ENCODE measurements at regions of chr3 and their contacts with region 1.

Region 1: DNA sequence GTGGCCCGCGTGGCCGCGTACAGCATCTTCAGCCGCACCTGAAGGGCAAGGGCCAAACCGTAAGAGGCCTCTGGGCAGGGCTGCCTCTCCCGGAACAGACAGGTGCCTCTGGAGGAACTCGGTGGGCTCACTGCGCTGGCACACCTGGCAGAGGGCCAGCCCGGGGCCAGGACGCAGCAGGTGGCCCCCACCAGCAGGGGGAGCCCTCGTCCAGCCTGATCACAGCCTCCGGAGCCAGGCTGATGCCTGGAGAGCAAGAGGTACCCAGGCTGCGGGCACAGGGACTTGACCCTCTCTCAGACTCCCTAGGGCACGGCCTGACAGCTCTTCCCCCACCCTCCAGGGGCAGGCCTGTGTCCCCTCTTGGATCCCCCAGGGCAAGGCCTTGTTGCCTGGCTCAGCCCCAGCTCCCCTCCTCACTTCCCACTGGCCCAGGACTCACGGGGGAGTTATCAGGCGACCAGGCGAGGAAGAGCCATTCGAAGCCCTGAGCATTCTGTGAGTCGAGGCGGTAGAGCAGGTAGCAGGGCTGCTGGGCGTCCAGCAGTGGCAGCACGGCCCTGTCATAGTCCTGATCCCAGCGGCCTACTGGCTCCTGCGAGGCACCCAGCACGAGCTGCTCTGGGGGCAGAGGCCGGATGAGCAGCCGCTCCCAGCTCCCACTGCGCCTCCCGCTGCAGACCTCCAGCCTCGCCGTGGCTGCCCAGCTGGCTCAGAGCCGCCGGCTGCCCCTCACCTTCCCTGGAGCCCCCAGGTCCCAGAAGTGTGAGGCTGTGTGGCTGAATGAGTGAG is 6.3 kb upstream of the TLR9 start:
- DNase-seq: peak; percentile 54 to 56
- H3K4me3 ChIP-seq: no peak overlapping the region
- H3K27ac ChIP-seq: no peak overlapping the region
- H3K4me1 ChIP-seq: peaks cover 3 to 5% of the 10 kb centered on the region in 2 donors
- H3K27me3 ChIP-seq: no peaks in the 10 kb centered on the region
- CTCF ChIP-seq: peak; percentile 55 to 75 (median 69)
- POLR2A ChIP-seq: peak in 1 of 2 donors; percentile 24

Region 2: DNA sequence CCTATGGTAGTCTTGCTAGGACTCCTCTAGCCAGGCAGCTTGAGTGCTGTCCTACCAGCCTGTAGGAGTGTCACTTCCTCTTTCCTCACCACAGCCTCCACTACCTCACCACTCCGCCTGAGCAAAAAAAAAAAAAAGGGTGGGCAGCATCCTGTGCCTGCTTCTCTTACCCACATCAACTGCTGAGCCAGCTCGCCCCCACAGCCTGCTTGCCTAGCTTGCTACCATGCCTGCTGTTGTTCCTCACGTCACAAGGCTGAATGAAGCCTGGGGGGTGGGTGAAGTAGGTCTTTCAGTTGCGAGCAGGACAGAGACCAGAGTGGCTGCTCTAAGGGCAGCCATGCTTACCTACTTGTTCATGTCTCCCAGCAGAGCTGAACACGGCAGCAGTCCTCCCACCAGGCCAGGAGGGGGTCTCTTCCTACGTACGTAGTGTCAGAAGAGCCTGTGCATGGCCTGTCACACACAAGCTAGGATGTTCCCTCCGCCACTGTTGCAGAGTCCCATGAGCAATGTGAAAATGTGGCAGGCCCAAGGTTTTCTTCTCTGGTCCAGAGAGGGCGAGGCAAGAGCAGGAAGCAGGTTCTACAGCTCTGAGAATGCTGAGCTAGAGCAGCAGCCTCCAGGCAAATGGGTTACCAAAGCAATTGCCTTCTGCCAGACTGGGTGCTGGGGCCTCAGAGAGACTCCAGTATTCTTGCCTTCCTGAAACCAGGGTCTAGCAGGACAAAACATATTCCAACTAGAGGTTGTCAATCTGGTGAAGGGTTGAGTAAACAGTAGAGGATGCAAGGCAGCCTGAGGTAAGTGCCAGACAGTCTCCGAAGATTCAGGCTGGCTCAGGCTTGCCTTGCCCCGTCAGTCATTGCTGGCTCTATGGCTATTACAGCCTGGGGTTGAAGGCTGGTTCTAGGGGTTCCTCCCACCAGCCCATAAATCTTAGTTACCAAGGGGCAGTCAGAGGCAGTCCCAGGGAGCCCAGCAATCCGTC is 21.9 kb after region 1 on chr3:
- intact Hi-C with region 1: no loop called
- DNase-seq: no peak
- H3K4me3 ChIP-seq: no peak overlapping the region
- H3K27ac ChIP-seq: no peak overlapping the region
- H3K4me1 ChIP-seq: no peaks in the 10 kb centered on the region
- H3K27me3 ChIP-seq: no peaks in the 10 kb centered on the region
- CTCF ChIP-seq: no peak
- POLR2A ChIP-seq: no peak

Region 3: DNA sequence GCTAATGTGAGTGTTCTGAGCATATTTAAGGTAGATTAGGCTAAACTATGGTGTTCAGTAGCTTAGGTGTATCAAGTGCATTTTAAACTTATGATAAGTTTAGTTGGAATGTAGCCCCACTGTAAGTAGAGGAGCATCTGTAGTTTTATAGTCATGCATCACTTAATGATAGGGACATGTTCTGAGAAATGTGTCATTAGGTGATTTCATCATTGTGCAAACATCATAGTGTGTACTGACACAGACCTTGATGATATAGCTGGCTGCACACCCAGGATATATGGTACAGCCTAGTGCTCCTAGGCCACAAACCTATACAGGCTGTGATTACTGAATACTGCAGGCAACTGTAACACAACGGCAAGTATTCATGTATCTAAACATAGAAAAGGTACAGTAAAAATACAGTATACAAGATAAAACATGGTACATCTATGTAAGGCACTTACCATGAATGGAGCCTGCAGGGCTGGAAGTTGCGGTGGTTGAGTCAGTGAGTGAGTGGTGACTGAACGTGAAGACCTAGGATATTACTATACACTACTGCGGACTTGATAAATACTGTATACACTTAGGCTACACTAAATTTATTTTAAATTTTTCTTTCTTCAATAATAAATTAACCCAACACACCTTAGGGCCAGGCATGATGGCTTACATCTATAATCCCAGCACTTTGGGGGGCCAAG is 102.3 kb after region 1 on chr3:
- intact Hi-C with region 1: loop called (anchors 5 kb)
- DNase-seq: no peak
- H3K4me3 ChIP-seq: no peak overlapping the region
- H3K27ac ChIP-seq: no peak overlapping the region
- H3K4me1 ChIP-seq: no peaks in the 10 kb centered on the region
- H3K27me3 ChIP-seq: no peaks in the 10 kb centered on the region
- CTCF ChIP-seq: no peak
- POLR2A ChIP-seq: no peak

Region 4: DNA sequence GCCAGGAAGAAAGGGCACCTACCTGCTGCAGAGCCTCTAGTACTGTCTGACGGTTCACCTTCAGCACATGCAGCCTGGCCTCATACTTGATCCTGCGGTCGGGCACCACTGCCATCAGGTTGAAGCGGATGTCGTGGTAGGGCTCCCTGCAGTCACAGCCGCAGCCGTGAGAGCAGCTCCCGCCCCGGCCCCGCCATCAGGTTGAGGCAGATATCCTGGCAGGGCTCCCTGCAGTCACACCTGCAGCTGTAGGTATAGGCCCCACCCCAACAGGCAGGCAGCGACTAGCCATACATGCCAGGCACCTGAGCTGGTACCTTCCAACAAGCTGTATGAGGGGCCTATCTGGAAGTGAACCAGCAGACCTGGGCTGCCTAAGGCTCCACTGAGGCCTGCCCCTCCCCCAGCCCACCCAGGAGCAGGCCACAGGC is 174.5 kb after region 1 on chr3:
- intact Hi-C with region 1: no loop called
- DNase-seq: no peak
- H3K4me3 ChIP-seq: no peak overlapping the region
- H3K27ac ChIP-seq: no peak overlapping the region
- H3K4me1 ChIP-seq: peaks cover 0 to 5% of the 10 kb centered on the region in 2 donors
- H3K27me3 ChIP-seq: no peaks in the 10 kb centered on the region
- CTCF ChIP-seq: no peak
- POLR2A ChIP-seq: no peak